ENCODE measurements at regions of chr10 and their contacts with region 1.

Region 1: GRCh38 chr10:108783897-108784296 is 1139.4 kb downstream of the XPNPEP1 start:
- DNase-seq: no peak
- ATAC-seq: no peak
- H3K4me3 ChIP-seq: no peak overlapping the region
- H3K27ac ChIP-seq: no peak overlapping the region
- H3K4me1 ChIP-seq: no peaks in the 10 kb centered on the region
- H3K27me3 ChIP-seq: no peaks in the 10 kb centered on the region
- CTCF ChIP-seq: no peak
- POLR2A ChIP-seq: no peak

Region 2: GRCh38 chr10:108696792-108697477 is 87.0 kb before region 1 on chr10:
- in situ Hi-C with region 1: loop called in 1 of 4 experiments (anchors 25 kb)
- intact Hi-C with region 1: no loop called
- DNase-seq: no peak
- ATAC-seq: no peak
- H3K4me3 ChIP-seq: no peak overlapping the region
- H3K27ac ChIP-seq: no peak overlapping the region
- H3K4me1 ChIP-seq: no peaks in the 10 kb centered on the region
- H3K27me3 ChIP-seq: no peaks in the 10 kb centered on the region
- CTCF ChIP-seq: no peak
- POLR2A ChIP-seq: no peak

Region 3: GRCh38 chr10:109018944-109019424 is 235.1 kb after region 1 on chr10:
- in situ Hi-C with region 1: no loop called
- intact Hi-C with region 1: no loop called
- DNase-seq: no peak
- ATAC-seq: no peak
- H3K4me3 ChIP-seq: no peak overlapping the region
- H3K27ac ChIP-seq: no peak overlapping the region
- H3K4me1 ChIP-seq: no peaks in the 10 kb centered on the region
- H3K27me3 ChIP-seq: no peaks in the 10 kb centered on the region
- CTCF ChIP-seq: no peak
- POLR2A ChIP-seq: no peak